Activated CD4-positive, alpha-beta memory T cell treated with anti-CD3 and anti-CD28 coated beads for 36 hours (primary cell): ENCODE measurements at regions of chr20 and their contacts with region 1.

Region 1: DNA sequence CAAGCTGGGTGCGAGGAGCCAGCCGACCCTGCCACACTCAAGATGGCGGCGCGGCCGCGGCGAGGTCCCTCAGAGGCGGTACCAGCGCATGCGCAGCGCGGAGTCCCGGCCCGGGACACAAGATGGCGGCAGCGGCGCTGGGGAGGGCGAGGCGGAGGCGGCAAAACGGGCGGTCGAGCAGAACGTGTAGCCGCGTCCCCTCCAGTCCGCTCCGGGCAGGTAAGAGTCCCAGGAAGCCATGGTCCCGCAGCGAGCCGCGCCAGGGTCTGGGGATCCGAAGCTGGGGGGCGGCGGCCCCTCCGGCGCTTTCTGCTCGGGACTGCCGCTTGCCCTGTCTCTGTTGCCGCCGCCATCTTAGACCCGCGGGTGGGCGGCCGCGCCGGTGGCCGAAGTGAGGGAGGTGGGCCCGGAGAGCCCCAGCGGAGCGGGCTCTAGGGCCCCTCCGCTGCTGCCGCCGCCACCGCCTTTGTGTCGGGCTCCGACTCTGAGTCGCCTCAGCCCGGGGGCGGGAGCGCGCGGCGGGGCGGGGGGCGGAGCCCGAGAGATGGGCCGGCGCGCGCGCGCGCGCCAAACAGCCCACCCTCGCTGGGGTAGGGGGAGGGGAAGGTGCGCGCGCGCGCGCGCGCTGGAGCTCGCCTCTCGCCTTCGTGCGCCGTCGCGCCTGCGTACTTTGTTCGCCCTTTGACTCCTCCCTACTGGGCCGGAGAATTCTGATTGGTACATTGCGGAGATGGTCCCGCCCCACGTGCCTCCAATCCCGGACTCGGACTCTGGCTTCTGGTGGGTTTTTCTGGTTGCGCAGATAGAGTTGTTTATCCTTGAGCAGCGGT is at the start of gene PCIF1:
- DNase-seq: peak; percentile 99
- H3K4me3 Mint-ChIP-seq: peak within 1 kb of the TSS; percentile 99
- H3K27ac Mint-ChIP-seq: peak within 1 kb of the TSS; percentile 99
- H3K4me1 Mint-ChIP-seq: peaks cover 32% of the 10 kb centered on the region
- H3K27me3 Mint-ChIP-seq: no peaks in the 10 kb centered on the region
- total RNA-seq, gene PCIF1: 29.9 to 33.0 TPM

Region 2: GRCh38 chr20:45576995-45577394 is 357.8 kb before region 1 on chr20:
- CTCF ChIA-PET with region 1: no interaction called
- POLR2A ChIA-PET with region 1: no interaction called
- intact Hi-C with region 1: no loop called
- DNase-seq: no peak
- H3K4me3 Mint-ChIP-seq: no peak overlapping the region
- H3K27ac Mint-ChIP-seq: no peak overlapping the region
- H3K4me1 Mint-ChIP-seq: no peaks in the 10 kb centered on the region
- H3K27me3 Mint-ChIP-seq: peaks cover 13% of the 10 kb centered on the region

Region 3: GRCh38 chr20:45798935-45799642 is 135.7 kb before region 1 on chr20:
- CTCF ChIA-PET with region 1: interaction called, 14 read pairs
- POLR2A ChIA-PET with region 1: interaction called, 4 read pairs
- intact Hi-C with region 1: no loop called
- DNase-seq: peak; percentile 74
- H3K4me3 Mint-ChIP-seq: no peak overlapping the region
- H3K27ac Mint-ChIP-seq: peak overlapping the region; percentile 4
- H3K4me1 Mint-ChIP-seq: peaks cover 16% of the 10 kb centered on the region
- H3K27me3 Mint-ChIP-seq: no peaks in the 10 kb centered on the region

Region 4: DNA sequence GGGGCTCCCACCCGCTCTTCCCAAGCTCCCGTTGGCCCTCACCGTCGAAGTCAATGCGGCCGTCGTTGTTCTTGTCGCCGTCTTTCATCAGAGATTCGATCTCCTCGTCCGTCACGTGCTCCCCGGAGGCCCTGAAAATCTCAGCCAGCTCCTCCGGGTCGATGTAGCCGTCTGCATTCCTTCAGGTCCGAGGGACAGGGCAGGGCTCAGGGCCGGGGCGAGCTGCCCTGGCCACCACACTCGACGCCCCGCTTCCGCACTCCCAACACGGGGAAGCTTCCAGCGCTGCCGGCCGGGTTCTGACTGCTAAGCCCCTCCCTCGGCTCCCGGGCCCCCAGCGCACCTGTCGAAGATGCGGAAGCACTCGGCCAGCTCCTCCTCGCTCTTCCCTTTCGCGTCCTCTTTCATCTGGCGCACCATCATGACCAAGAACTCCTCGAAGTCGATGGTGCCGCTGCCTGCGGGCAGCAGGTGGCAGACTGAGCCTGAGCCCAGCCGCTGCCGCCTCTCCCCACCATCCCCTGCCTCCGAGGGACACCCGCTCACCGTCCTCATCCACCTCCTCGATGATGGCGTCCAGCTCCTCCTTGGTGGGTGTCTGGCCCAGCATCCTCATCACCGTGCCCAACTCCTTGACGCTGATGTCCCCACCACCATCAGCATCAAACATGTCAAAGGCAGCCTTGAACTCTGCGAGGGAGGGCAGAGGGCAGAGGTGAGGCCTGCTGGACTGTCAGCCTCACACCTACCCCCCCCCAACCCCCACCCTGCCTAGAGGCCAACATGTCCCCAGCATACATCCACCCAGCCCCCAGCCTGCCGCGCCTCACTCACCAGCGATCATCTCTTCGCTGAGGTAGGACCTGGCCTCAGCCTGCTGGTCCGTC is 110.6 kb before region 1 on chr20:
- CTCF ChIA-PET with region 1: interaction called, 15 read pairs
- POLR2A ChIA-PET with region 1: no interaction called
- intact Hi-C with region 1: no loop called
- DNase-seq: peak; percentile 72
- H3K4me3 Mint-ChIP-seq: peak overlapping the region; percentile 48
- H3K27ac Mint-ChIP-seq: no peak overlapping the region
- H3K4me1 Mint-ChIP-seq: peaks cover 14% of the 10 kb centered on the region
- H3K27me3 Mint-ChIP-seq: peaks cover 23% of the 10 kb centered on the region

Region 5: GRCh38 chr20:45880988-45881788 is 53.6 kb before region 1 on chr20 and contains the start of gene ZSWIM1:
- CTCF ChIA-PET with region 1: interaction called, 5 read pairs
- POLR2A ChIA-PET with region 1: interaction called, 6 read pairs
- intact Hi-C with region 1: loop called (anchors 2 kb)
- DNase-seq: peak; percentile 99
- H3K4me3 Mint-ChIP-seq: peak within 1 kb of the TSS; percentile 92
- H3K27ac Mint-ChIP-seq: peak within 1 kb of the TSS; percentile 91
- H3K4me1 Mint-ChIP-seq: peaks cover 41% of the 10 kb centered on the region
- H3K27me3 Mint-ChIP-seq: no peaks in the 10 kb centered on the region
- total RNA-seq, gene ZSWIM1: 7.7 to 8.1 TPM

Region 6: GRCh38 chr20:45910670-45911485 is 23.9 kb before region 1 on chr20:
- CTCF ChIA-PET with region 1: no interaction called
- POLR2A ChIA-PET with region 1: interaction called, 3 read pairs
- intact Hi-C with region 1: loop called (anchors 2 kb)
- DNase-seq: peak; percentile 98
- H3K4me3 Mint-ChIP-seq: peak overlapping the region; percentile 74
- H3K27ac Mint-ChIP-seq: peak overlapping the region; percentile 46
- H3K4me1 Mint-ChIP-seq: peaks cover 23% of the 10 kb centered on the region
- H3K27me3 Mint-ChIP-seq: peaks cover 9% of the 10 kb centered on the region

Region 7: DNA sequence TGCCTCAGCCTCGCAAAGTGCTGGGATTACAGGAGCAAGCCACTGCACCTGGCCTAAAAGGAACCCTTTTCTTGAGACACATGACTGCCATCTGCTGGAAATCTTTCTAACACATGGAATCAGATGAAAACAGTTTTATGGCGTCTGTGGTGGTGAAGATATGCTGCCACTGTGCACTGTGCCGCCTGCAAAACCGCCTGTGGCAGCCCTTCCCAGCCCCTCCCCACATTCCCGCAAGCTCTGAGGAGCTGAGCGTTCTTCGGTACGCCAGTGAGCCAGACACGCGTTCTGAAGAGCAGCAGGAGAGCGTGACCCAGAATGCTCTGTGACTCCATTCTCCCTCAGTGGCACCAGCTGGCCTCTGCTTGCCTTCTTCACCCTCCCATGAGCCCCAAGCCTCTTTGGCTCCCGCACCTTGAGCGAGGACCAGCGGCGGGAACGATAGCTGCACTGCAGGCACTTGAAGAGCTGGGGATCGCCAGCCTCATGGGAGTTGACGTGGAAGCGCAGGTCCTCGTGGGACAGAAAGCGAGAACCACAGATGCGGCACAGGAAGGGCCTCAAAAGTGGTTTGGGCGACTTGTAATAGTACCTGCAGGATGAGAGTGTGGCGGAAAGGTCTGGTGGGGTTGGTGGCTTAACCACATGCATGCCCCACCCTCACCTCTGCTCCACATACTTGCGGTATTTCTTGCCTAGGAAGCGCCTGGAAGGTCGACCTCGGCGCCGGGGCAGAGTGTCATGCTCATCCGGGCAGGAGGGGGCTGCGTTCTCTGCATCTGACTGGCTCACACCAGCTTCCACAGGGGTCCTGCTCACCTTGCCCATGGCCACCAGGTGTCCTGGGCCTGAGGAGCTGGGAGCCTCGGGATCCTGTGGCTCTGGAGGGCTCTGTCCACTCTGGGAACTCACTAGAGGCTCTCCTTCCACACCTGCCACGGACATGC is 28.5 kb after region 1 on chr20:
- CTCF ChIA-PET with region 1: interaction called, 67 read pairs
- POLR2A ChIA-PET with region 1: interaction called, 6 read pairs
- intact Hi-C with region 1: no loop called
- DNase-seq: no peak
- H3K4me3 Mint-ChIP-seq: no peak overlapping the region
- H3K27ac Mint-ChIP-seq: no peak overlapping the region
- H3K4me1 Mint-ChIP-seq: peaks cover 8% of the 10 kb centered on the region
- H3K27me3 Mint-ChIP-seq: no peaks in the 10 kb centered on the region

Region 8: DNA sequence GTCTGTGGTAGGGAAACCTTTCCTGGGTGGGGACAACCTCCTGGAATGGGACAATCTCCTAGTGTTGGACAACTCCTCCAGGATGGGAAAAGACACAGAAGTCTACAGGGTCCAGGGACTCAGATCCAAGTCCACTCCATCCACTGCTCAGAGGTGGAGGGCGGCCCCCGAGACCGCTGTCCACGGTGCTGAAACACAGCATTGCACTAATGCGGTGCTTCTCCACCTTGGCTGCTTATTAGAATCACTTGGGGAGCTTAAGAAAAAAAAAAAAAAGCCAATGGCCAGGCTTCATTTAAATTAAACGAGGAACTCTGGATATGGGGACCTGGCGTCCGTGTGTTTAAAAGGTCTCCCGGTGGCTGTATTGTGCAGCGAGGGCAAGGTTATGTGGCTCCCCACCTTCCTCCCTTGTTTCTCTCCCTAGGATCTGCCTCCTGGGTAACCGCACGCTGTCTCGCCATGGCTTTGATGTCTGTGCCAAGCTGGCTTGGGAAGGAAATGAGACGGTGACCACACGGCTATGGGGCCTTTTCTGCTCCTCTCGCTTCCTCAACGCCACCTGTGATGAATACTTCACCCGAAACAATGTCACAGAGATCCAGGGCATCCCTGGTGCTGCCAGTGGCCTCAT is 106.2 kb after region 1 on chr20:
- CTCF ChIA-PET with region 1: no interaction called
- POLR2A ChIA-PET with region 1: no interaction called
- intact Hi-C with region 1: no loop called
- DNase-seq: peak; percentile 60
- H3K4me3 Mint-ChIP-seq: no peak overlapping the region
- H3K27ac Mint-ChIP-seq: no peak overlapping the region
- H3K4me1 Mint-ChIP-seq: no peaks in the 10 kb centered on the region
- H3K27me3 Mint-ChIP-seq: peaks cover 39% of the 10 kb centered on the region

Region 9: DNA sequence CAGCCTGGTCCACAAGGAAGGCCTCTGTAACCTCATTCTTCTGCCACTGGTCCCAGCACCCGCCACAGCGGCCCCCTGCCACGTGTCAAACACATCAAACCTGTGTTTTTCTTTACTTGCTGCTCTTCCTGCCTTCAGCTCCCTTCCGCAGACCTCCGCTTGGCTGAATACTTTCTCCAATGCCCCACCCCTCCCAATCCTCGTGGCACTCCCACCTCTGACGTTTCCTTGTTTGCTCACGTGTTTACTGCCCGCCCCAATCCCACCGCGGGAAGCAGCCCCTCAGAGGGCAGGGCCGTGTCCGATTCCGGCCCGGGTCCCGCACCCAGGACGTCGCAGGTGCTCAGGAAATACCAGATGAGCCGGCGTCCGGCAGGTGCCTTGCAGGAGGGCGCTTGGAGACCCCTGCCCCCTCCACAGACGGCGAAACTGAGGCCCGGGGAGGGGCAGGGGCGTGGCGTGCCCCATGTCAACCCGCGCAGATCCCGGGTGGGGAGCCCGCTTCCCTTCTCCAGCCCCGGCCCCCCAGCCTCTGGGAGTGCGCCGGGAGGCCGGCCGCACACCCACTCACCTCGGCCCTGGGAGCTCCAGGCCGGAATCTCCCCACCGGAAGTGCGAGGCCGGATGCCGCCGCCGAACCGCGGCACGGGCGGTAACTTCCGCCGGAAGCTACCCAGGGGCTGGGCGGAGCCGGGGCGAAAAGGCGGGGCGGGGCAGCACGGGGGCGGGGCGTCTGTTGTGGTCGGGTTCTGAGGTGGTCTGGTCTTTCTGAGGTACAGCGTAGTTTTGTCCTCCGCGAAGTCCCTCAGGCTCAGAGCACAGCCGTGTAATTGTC is 429.2 kb after region 1 on chr20:
- CTCF ChIA-PET with region 1: no interaction called
- POLR2A ChIA-PET with region 1: no interaction called
- intact Hi-C with region 1: loop called (anchors 10 kb)
- DNase-seq: peak; percentile 91
- H3K4me3 Mint-ChIP-seq: peak overlapping the region; percentile 94
- H3K27ac Mint-ChIP-seq: peak overlapping the region; percentile 94
- H3K4me1 Mint-ChIP-seq: peaks cover 81% of the 10 kb centered on the region
- H3K27me3 Mint-ChIP-seq: no peaks in the 10 kb centered on the region